Activated CD4-positive, alpha-beta T cell treated with anti-CD3 and anti-CD28 coated beads, Interleukin-2, amount 10 ng/mL, durations not matched to agents 24 days and 14 days (primary cell): ENCODE measurements at regions of chr16 and their contacts with region 1.

Region 1: GRCh38 chr16:47732523-47733111 is 271.5 kb downstream of the PHKB start:
- DNase-seq: peak; percentile 74
- H3K4me3 Mint-ChIP-seq: peak overlapping the region; percentile 4
- H3K27ac Mint-ChIP-seq: peak overlapping the region; percentile 88
- H3K4me1 Mint-ChIP-seq: peaks cover 23% of the 10 kb centered on the region
- H3K27me3 Mint-ChIP-seq: peaks cover 2% of the 10 kb centered on the region

Region 2: GRCh38 chr16:47460711-47461597 is 271.7 kb before region 1 on chr16 and contains the starts of genes ITFG1 and PHKB:
- intact Hi-C with region 1: loop called (anchors 10 kb)
- DNase-seq: peak; percentile 99
- H3K4me3 Mint-ChIP-seq: peak within 1 kb of the TSS; percentile 94
- H3K27ac Mint-ChIP-seq: peak within 1 kb of the TSS; percentile 97
- H3K4me1 Mint-ChIP-seq: peaks cover 36% of the 10 kb centered on the region
- H3K27me3 Mint-ChIP-seq: no peaks in the 10 kb centered on the region
- total RNA-seq, gene ITFG1: 26.1 and 28.5 TPM in 2 replicates
- total RNA-seq, gene PHKB: 23.7 and 27.9 TPM in 2 replicates

Region 3: GRCh38 chr16:47713225-47713595 is 19.4 kb before region 1 on chr16:
- intact Hi-C with region 1: loop called (anchors 1 kb)
- DNase-seq: peak; percentile 69
- H3K4me3 Mint-ChIP-seq: no peak overlapping the region
- H3K27ac Mint-ChIP-seq: no peak overlapping the region
- H3K4me1 Mint-ChIP-seq: peaks cover 13% of the 10 kb centered on the region
- H3K27me3 Mint-ChIP-seq: peaks cover 3% of the 10 kb centered on the region